ENCODE measurements at regions of chr14 and their contacts with region 1.

Region 1: DNA sequence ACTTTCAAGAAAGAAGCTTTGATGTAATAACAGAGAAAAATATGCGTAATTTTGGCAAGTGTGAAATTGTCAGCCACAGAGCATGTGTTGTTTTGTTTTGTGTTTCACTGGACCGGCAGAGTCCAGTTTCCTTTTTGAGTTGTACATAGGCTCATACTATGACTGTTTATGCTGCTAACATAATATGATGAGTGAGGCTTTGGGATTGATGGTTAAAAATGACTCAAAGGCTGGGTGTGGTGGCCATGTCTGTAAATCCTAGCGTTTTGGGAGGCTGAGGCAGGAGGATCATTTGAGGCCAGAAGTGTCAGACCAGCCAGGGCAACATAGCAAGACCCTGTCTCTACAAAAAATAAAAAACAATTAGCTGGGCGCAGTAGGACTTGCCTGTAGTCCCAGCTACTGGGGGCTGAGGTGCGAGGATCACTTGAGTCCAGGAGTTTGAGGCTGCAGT is 487.9 kb downstream of the PCNX1 start:
- DNase-seq: no peak
- ATAC-seq: no peak
- H3K4me3 ChIP-seq: no peak overlapping the region
- H3K4me3 Mint-ChIP-seq: peak overlapping the region; percentile 35
- H3K27ac ChIP-seq: peak overlapping the region; percentile 28 to 97
- H3K27ac Mint-ChIP-seq: peak overlapping the region; percentile 94
- H3K4me1 ChIP-seq: peaks cover 58 to 60% of the 10 kb centered on the region in 2 donors
- H3K4me1 Mint-ChIP-seq: peaks cover 82% of the 10 kb centered on the region
- H3K27me3 ChIP-seq: no peaks in the 10 kb centered on the region
- H3K27me3 Mint-ChIP-seq: no peaks in the 10 kb centered on the region
- CTCF ChIP-seq: no peak

Region 2: GRCh38 chr14:71380271-71380670 is 14.9 kb before region 1 on chr14:
- CTCF ChIA-PET with region 1: interaction called, 5 read pairs
- POLR2A ChIA-PET with region 1: no interaction called
- intact Hi-C with region 1: loop called (anchors 2 kb)
- DNase-seq: no peak
- ATAC-seq: no peak
- H3K4me3 ChIP-seq: no peak overlapping the region
- H3K4me3 Mint-ChIP-seq: peak overlapping the region; percentile 23
- H3K27ac ChIP-seq: no peak overlapping the region
- H3K27ac Mint-ChIP-seq: no peak overlapping the region
- H3K4me1 ChIP-seq: peaks cover 23 to 44% of the 10 kb centered on the region in 2 donors
- H3K4me1 Mint-ChIP-seq: peaks cover 73% of the 10 kb centered on the region
- H3K27me3 ChIP-seq: no peaks in the 10 kb centered on the region
- H3K27me3 Mint-ChIP-seq: no peaks in the 10 kb centered on the region
- CTCF ChIP-seq: no peak

Region 3: DNA sequence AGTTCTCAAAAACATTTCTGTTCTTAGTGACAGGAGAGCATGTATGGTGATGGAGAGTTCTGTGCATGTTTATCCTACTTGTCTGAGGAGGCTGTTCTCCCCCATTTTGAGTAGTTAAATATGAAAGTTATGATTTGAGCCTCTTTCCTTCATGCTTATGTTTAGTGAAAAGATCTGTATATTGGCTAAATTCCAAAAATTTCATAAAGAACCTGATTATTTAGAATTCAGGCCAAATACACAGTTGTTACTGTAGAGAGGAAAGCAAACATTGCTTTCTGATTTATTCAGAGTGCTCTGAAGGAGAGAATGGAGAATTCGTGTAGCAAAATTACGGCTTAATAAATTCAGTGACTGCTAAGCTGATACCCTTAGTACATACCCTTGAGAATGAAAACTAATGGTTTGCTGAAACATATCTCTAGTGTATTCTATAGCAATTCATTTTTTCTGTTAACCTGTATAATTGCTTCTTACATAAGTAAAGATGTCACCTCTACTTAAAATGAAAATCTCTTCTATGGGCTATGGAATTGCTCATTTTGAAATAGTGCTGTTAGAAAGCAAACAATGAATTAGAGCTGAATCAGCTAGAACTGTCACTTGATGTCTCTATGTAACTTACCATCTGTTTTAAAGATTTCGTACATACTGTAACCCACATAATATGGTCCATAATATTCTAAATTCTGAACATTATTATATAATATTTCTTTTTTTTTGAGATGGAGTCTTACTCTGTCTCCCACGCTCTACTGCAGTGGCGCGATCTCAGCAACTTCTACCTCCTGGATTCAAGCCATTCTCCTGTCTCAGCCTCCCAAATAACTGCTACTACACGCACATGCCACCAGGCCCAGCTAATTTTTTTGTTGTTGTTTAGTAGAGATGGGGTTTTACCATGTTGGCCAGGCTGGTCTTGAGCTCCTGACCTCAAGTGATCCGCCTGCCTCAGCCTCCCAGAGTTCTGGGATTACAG is 120.1 kb after region 1 on chr14:
- CTCF ChIA-PET with region 1: no interaction called
- POLR2A ChIA-PET with region 1: interaction called, 10 read pairs
- intact Hi-C with region 1: no loop called
- DNase-seq: no peak
- ATAC-seq: no peak
- H3K4me3 ChIP-seq: no peak overlapping the region
- H3K4me3 Mint-ChIP-seq: no peak overlapping the region
- H3K27ac ChIP-seq: no peak overlapping the region
- H3K27ac Mint-ChIP-seq: no peak overlapping the region
- H3K4me1 ChIP-seq: no peaks in the 10 kb centered on the region
- H3K4me1 Mint-ChIP-seq: no peaks in the 10 kb centered on the region
- H3K27me3 ChIP-seq: no peaks in the 10 kb centered on the region
- H3K27me3 Mint-ChIP-seq: no peaks in the 10 kb centered on the region
- CTCF ChIP-seq: no peak

Region 4: GRCh38 chr14:71780075-71780474 is 384.9 kb after region 1 on chr14:
- CTCF ChIA-PET with region 1: no interaction called
- POLR2A ChIA-PET with region 1: no interaction called
- intact Hi-C with region 1: no loop called
- DNase-seq: no peak
- ATAC-seq: no peak
- H3K4me3 ChIP-seq: no peak overlapping the region
- H3K4me3 Mint-ChIP-seq: no peak overlapping the region
- H3K27ac ChIP-seq: no peak overlapping the region
- H3K27ac Mint-ChIP-seq: no peak overlapping the region
- H3K4me1 ChIP-seq: no peaks in the 10 kb centered on the region
- H3K4me1 Mint-ChIP-seq: no peaks in the 10 kb centered on the region
- H3K27me3 ChIP-seq: peaks cover 0 to 10% (median 6%) of the 10 kb centered on the region in 4 experiments
- H3K27me3 Mint-ChIP-seq: peaks cover 25% of the 10 kb centered on the region
- CTCF ChIP-seq: no peak